ENCODE measurements at regions of chr12 and their contacts with region 1.

Region 1: DNA sequence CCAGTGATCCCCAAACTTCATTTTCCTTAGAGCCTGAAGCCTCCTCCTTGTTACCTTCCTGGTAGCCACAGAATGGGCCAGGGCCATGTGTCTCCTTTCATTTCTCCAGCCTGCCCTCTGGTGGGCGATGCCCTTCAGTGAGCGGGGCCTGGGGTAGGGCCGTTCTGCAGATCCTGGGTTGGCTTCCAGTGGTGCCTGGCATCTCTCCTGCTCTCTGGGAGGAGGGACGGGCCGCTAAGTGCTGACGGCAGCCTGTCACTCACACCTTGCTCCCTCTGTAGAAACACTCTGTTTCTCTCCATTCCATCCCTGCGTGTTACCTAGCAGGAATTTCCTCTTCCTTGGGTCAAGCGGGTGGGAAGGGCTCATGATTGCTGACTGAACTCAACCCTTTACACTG is 232.1 kb downstream of the CACNA1C start:
- DNase-seq: peak; percentile 89
- ATAC-seq: peak; percentile 89
- H3K4me3 Mint-ChIP-seq: no peak overlapping the region
- H3K27ac Mint-ChIP-seq: no peak overlapping the region
- H3K4me1 Mint-ChIP-seq: peaks cover 70% of the 10 kb centered on the region
- H3K27me3 Mint-ChIP-seq: peaks cover 3% of the 10 kb centered on the region; the same call in 1 of the 2 replicates
- CTCF ChIP-seq: peak; percentile 67

Region 2: GRCh38 chr12:2183556-2184541 is 101.0 kb before region 1 on chr12:
- CTCF ChIA-PET with region 1: interaction called, 15 read pairs
- POLR2A ChIA-PET with region 1: no interaction called
- DNase-seq: no peak
- ATAC-seq: peak; percentile 71
- H3K4me3 Mint-ChIP-seq: no peak overlapping the region
- H3K27ac Mint-ChIP-seq: peak overlapping the region; percentile 54; the same call in 1 of the 2 replicates
- H3K4me1 Mint-ChIP-seq: peaks cover 35% of the 10 kb centered on the region
- H3K27me3 Mint-ChIP-seq: no peaks in the 10 kb centered on the region
- CTCF ChIP-seq: no peak

Region 3: GRCh38 chr12:2198005-2198501 is 86.8 kb before region 1 on chr12:
- CTCF ChIA-PET with region 1: interaction called, 10 read pairs
- POLR2A ChIA-PET with region 1: no interaction called
- DNase-seq: peak; percentile 69
- ATAC-seq: peak; percentile 88
- H3K4me3 Mint-ChIP-seq: peak overlapping the region; percentile 61
- H3K27ac Mint-ChIP-seq: peak overlapping the region; percentile 96
- H3K4me1 Mint-ChIP-seq: peaks cover 67% of the 10 kb centered on the region
- H3K27me3 Mint-ChIP-seq: no peaks in the 10 kb centered on the region
- CTCF ChIP-seq: no peak

Region 4: DNA sequence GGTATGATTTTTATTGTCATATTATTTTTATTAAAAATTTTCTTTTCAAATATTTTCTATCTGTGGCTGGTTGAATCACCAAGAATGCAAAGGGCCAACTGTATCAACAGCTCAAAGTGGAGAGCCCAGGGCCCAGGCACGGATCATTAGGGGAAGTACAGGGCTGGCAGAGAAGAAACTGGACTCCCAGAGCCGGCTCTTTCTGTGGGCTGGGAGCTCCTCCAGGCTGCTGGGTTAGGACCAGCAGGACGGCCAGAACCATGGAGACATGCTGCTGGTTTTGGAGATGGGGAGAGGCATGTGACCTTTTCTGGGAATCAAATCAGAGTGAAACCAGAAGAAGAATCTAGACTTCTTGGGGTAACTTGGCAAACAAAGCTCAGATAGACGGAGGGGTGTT is 11.6 kb before region 1 on chr12:
- CTCF ChIA-PET with region 1: interaction called, 10 read pairs
- POLR2A ChIA-PET with region 1: no interaction called
- DNase-seq: no peak
- ATAC-seq: no peak
- H3K4me3 Mint-ChIP-seq: no peak overlapping the region
- H3K27ac Mint-ChIP-seq: no peak overlapping the region
- H3K4me1 Mint-ChIP-seq: peaks cover 5% of the 10 kb centered on the region
- H3K27me3 Mint-ChIP-seq: no peaks in the 10 kb centered on the region
- CTCF ChIP-seq: no peak